H1 (cell line): ENCODE measurements at regions of chr20 and their contacts with region 1.

Region 1: GRCh38 chr20:19995220-19995863 is 21.8 kb upstream of the NAA20 start:
- DNase-seq: no peak
- H3K4me3 ChIP-seq: no peak overlapping the region
- H3K27ac ChIP-seq: no peak overlapping the region
- H3K4me1 ChIP-seq: peaks cover 2 to 7% (median 5%) of the 10 kb centered on the region in 4 experiments
- H3K27me3 ChIP-seq: no peaks in the 10 kb centered on the region; a peak in 1 of 7 replicates
- CTCF ChIP-seq: peak in 2 of 3 experiments; percentile 54 to 68; a peak in 3 of 4 replicates
- EP300 ChIP-seq: no peak
- POLR2A ChIP-seq: no peak
- RAD21 ChIP-seq: peak; percentile 69 to 72

Region 2: DNA sequence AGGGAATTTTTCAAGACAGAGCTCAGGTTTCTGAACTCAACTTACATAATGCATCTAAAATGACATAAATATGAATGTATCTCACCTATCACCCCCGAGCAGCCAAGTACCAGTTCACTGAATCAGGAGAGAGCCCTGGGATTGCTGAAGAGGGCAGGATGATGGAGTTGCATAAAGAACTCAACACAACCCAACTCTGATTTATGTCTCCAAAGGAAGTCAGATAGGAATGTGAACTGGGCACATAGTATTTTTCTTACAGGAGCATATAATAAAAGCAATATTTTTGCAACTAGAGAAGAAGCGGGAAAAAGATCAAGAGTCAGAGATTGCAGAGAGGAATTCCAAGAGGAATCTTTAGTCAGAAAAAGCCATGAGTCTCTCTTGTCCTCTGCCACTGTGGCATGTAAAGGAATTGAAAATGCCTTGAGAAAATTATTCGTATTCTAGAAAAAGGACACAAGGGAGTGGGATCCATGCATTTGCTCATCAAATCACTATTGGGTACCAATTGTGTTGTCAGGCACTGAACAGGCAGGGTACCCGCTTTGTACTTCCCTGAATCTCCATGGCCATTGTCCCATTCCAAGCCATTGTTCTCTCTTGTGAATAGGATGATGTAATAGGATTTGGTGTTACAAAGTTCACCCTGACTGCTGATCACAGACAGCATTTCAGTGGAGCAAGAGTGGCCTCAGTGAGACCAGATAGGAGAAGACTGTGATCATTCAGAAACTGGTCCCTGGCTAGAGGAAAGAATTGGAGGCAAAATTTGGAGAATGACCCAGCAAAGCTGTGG is 221.0 kb before region 1 on chr20:
- CTCF ChIA-PET with region 1: no interaction called
- POLR2A ChIA-PET with region 1: no interaction called
- DNase-seq: no peak
- H3K4me3 ChIP-seq: no peak overlapping the region
- H3K27ac ChIP-seq: no peak overlapping the region
- H3K4me1 ChIP-seq: peaks cover 0 to 12% (median 1%) of the 10 kb centered on the region in 4 experiments; a peak in 3 of 7 replicates
- H3K27me3 ChIP-seq: no peaks in the 10 kb centered on the region; a peak in 1 of 7 replicates
- CTCF ChIP-seq: no peak
- EP300 ChIP-seq: no peak
- POLR2A ChIP-seq: no peak
- RAD21 ChIP-seq: no peak

Region 3: GRCh38 chr20:19784511-19785172 is 210.7 kb before region 1 on chr20:
- CTCF ChIA-PET with region 1: interaction called, 11 read pairs
- POLR2A ChIA-PET with region 1: interaction called, 3 read pairs
- DNase-seq: peak in 1 of 2 experiments; percentile 49
- H3K4me3 ChIP-seq: no peak overlapping the region
- H3K27ac ChIP-seq: no peak overlapping the region
- H3K4me1 ChIP-seq: peaks cover 0 to 5% (median 2%) of the 10 kb centered on the region in 4 experiments; a peak in 5 of 7 replicates
- H3K27me3 ChIP-seq: no peaks in the 10 kb centered on the region
- CTCF ChIP-seq: peak; percentile 40 to 72 (median 69)
- EP300 ChIP-seq: no peak
- POLR2A ChIP-seq: no peak
- RAD21 ChIP-seq: peak; percentile 79 to 82

Region 4: GRCh38 chr20:19958219-19958618 is 37.1 kb before region 1 on chr20:
- CTCF ChIA-PET with region 1: interaction called, 10 read pairs
- POLR2A ChIA-PET with region 1: no interaction called
- DNase-seq: no peak
- H3K4me3 ChIP-seq: no peak overlapping the region; a peak in 1 of 8 replicates
- H3K27ac ChIP-seq: no peak overlapping the region
- H3K4me1 ChIP-seq: peaks cover 3 to 10% (median 7%) of the 10 kb centered on the region in 4 experiments; a peak in 5 of 7 replicates
- H3K27me3 ChIP-seq: no peaks in the 10 kb centered on the region
- CTCF ChIP-seq: no peak
- EP300 ChIP-seq: no peak
- POLR2A ChIP-seq: no peak
- RAD21 ChIP-seq: no peak

Region 5: GRCh38 chr20:19976595-19977372 is 18.6 kb before region 1 on chr20:
- CTCF ChIA-PET with region 1: interaction called, 11 read pairs
- POLR2A ChIA-PET with region 1: no interaction called
- DNase-seq: peak; percentile 47 to 50
- H3K4me3 ChIP-seq: no peak overlapping the region
- H3K27ac ChIP-seq: no peak overlapping the region
- H3K4me1 ChIP-seq: peaks cover 0 to 7% (median 0%) of the 10 kb centered on the region in 4 experiments; a peak in 3 of 7 replicates
- H3K27me3 ChIP-seq: no peaks in the 10 kb centered on the region
- CTCF ChIP-seq: no peak
- EP300 ChIP-seq: no peak
- POLR2A ChIP-seq: no peak
- RAD21 ChIP-seq: no peak

Region 6: DNA sequence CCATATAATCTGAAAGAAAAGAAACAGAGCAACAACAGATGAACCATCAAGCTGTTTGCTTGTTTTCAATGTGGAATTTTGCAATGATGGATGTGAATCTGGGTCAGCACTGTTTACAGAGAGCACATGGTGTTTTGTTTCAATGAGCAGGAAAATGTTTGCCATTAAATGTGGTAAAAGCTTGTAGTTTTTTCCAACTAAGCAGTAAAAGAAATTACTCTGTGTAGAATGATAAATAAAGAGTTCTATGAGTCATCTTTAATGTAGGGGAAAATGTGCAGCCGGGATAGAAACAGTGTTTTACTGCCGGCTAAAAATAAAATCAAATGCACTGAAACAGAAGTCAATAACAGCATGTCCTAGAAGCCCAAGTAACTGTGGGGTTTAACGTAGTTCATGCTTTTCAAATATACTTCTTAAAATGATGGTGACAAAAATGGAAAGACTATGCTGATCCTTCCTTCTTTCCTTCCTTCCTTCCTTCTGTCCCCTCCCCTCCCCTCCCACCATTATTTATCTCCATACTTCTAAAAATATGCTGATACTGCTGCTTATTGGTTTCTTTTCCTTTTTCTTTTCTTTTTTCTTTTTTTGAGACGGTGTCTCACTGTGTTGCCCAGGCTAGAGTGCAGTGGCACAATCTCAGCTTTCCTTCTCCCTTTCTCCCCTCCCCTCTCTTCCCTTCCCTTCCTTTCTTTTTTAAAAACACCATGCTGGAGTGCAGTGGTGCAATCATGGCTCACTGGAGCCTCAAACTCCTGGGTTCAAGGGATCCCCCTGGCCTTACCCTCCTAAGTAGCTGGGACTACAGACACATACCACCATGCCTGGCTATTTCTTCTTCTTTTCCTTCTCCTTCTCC is 15.5 kb after region 1 on chr20:
- CTCF ChIA-PET with region 1: interaction called, 11 read pairs
- POLR2A ChIA-PET with region 1: no interaction called
- DNase-seq: no peak
- H3K4me3 ChIP-seq: no peak overlapping the region
- H3K27ac ChIP-seq: no peak overlapping the region
- H3K4me1 ChIP-seq: no peaks in the 10 kb centered on the region; a peak in 1 of 7 replicates
- H3K27me3 ChIP-seq: no peaks in the 10 kb centered on the region
- CTCF ChIP-seq: no peak
- EP300 ChIP-seq: no peak
- POLR2A ChIP-seq: no peak
- RAD21 ChIP-seq: no peak

Region 7: DNA sequence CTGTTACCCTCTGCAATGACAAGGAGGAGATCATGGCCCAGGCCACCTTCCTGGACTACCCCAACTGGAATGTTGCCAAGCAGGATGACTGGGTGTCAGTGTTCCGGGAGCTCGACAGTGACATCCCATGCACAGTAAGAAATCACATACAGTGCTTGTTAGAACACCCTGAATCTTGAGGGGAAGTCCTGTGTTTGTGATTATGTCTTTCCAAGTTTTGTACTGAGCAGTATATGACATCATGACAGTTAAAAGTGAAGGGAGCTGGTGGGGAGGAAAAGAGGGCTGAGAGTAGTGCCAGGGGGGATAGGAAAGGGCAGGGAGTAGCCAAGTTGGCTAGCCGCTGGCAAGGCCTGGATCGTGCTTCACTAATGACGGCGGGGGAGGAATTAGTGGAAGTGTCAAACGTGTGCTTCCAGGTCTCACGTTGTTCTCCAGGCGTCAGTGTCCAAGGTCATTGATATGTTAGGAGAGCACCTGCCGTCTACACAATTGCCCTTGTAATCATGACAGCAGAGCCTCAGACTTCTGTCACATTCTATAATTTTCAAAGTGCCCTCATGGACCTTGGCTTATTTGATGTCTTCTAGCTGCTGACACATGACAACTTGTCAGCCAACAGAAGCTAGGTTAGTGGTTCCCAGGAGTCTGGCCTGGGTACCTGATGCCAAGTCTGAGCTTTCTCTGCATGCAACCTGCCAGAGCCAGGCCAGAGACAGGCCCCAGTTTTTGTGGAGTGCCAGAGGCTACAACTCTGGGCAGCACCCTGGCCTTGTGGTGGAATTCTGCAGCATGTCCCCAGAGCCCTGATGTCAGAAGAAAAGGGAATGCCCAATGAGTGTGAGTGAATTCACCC is 75.8 kb after region 1 on chr20:
- CTCF ChIA-PET with region 1: no interaction called
- POLR2A ChIA-PET with region 1: no interaction called
- DNase-seq: no peak
- H3K4me3 ChIP-seq: no peak overlapping the region
- H3K27ac ChIP-seq: no peak overlapping the region
- H3K4me1 ChIP-seq: no peaks in the 10 kb centered on the region
- H3K27me3 ChIP-seq: no peaks in the 10 kb centered on the region
- CTCF ChIP-seq: no peak
- EP300 ChIP-seq: no peak
- POLR2A ChIP-seq: no peak
- RAD21 ChIP-seq: no peak